GM12878 (cell line): ENCODE measurements at regions of chr16 and their contacts with region 1.

Region 1: DNA sequence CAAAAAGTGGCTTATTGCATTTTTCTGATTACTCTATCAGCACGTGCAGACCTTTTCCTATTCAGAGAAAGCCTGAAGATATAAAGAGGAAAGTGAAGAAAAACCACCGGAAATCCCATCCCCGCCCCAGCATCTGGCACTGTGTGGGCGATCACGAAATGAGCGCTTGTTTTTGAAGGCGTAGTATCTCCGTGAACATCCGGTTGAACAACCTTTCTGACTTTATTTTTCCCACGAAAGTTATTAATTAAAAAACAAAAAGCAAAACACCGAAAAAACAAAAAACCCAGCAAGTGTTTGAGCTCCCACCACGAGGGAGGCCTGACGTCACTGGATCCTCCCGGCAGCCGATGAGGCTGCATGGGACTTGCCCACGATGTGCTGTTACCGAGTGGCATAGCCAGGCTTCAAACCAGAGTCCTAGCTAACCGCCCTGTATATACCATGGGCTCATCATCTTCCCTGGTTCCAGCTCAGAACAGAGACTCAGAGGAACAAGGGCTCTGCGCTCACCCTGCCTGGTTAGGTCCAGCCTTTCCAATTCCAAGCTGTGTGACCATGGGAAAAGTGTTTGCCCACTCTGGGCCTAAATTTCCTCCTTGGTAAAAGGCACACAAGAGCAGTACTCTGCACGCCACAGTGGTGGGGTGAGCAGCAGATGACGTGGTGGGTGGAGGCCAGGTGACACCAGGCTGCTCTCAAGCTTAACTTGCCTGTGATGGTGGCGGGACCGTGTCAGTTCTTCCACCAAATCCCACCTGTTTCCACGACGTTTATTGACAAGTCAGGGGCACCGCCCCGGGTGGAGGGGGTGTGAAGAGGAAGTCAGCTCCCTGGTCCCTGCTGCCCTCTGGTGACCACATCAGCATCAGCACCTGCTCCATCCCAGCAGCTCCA is 34.3 kb upstream of the IL21R start:
- DNase-seq: peak; percentile 87
- ATAC-seq: peak; percentile 83
- H3K4me3 ChIP-seq: peak overlapping the region; percentile 46
- H3K27ac ChIP-seq: peak overlapping the region; percentile 95
- H3K4me1 ChIP-seq: peaks cover 34% of the 10 kb centered on the region
- H3K27me3 ChIP-seq: no peaks in the 10 kb centered on the region
- CTCF ChIP-seq: peak; percentile 84 to 91 (median 87)
- EP300 ChIP-seq: peak; percentile 72 to 86; a peak in 3 of 4 replicates
- POLR2A ChIP-seq: peak; percentile 54
- RAD21 ChIP-seq: peak; percentile 83

Region 2: DNA sequence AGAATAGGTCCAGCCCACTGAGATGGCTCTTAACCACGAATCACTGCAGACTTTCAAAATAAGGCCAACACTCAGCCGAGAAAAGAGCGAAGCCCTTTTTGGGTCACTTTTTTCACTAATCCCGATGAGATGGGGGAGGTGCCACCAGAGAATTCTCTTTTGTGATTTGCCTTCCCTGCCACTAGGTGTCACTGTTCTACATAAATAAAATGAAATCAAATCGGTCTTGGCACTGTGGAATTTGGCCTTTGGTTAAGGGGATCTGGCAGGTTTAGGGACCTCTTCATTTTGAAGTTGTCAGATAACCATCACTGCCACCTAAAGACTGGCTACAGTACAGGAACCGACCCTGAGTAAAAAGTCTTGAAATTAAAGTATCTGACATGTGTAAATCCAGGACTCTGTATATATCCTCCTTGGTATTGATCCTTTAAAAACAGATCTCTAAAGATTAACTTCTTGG is 1529.0 kb before region 1 on chr16:
- CTCF ChIA-PET with region 1: no interaction called
- POLR2A ChIA-PET with region 1: no interaction called
- RAD21 ChIA-PET with region 1: no interaction called
- SMC1A ChIA-PET with region 1: no interaction called
- in situ Hi-C with region 1: loop called (anchors 25 kb)
- intact Hi-C with region 1: no loop called
- DNase-seq: peak; percentile 11
- ATAC-seq: peak; percentile 65
- H3K4me3 ChIP-seq: no peak overlapping the region
- H3K27ac ChIP-seq: no peak overlapping the region
- H3K4me1 ChIP-seq: no peaks in the 10 kb centered on the region
- H3K27me3 ChIP-seq: no peaks in the 10 kb centered on the region
- CTCF ChIP-seq: peak; percentile 63 to 67 (median 63)
- EP300 ChIP-seq: no peak
- POLR2A ChIP-seq: no peak
- RAD21 ChIP-seq: peak; percentile 72

Region 3: GRCh38 chr16:27203429-27204231 is 164.1 kb before region 1 on chr16 and contains the start of gene KDM8:
- CTCF ChIA-PET with region 1: interaction called, 14 read pairs
- POLR2A ChIA-PET with region 1: interaction called, 7 read pairs
- RAD21 ChIA-PET with region 1: interaction called, 23 read pairs
- SMC1A ChIA-PET with region 1: interaction called, 10 read pairs
- in situ Hi-C with region 1: no loop called
- intact Hi-C with region 1: no loop called
- DNase-seq: peak; percentile 99
- ATAC-seq: peak; percentile 90
- H3K4me3 ChIP-seq: peak within 1 kb of the TSS; percentile 80
- H3K27ac ChIP-seq: peak within 1 kb of the TSS; percentile 97
- H3K4me1 ChIP-seq: peaks cover 25% of the 10 kb centered on the region
- H3K27me3 ChIP-seq: no peaks in the 10 kb centered on the region
- CTCF ChIP-seq: no peak
- EP300 ChIP-seq: no peak
- POLR2A ChIP-seq: peak; percentile 88
- RAD21 ChIP-seq: no peak
- polyA plus RNA-seq, gene KDM8: 0.79 to 1.3 TPM

Region 4: GRCh38 chr16:27268376-27269299 is 99.1 kb before region 1 on chr16 and contains the start of gene NSMCE1:
- CTCF ChIA-PET with region 1: interaction called, 11 read pairs
- POLR2A ChIA-PET with region 1: interaction called, 5 read pairs
- RAD21 ChIA-PET with region 1: interaction called, 36 read pairs
- SMC1A ChIA-PET with region 1: interaction called, 41 read pairs
- in situ Hi-C with region 1: no loop called
- intact Hi-C with region 1: no loop called
- DNase-seq: peak; percentile 84
- ATAC-seq: peak; percentile 95
- H3K4me3 ChIP-seq: peak within 1 kb of the TSS; percentile 81
- H3K27ac ChIP-seq: peak within 1 kb of the TSS; percentile 79
- H3K4me1 ChIP-seq: peaks cover 4% of the 10 kb centered on the region
- H3K27me3 ChIP-seq: no peaks in the 10 kb centered on the region
- CTCF ChIP-seq: peak; percentile 12 to 42 (median 13); a peak in 2 of 6 replicates
- EP300 ChIP-seq: 0 out of 4 replicates have a peak, but pooled peaks have one; percentile 21 to 25
- POLR2A ChIP-seq: peak; percentile 96
- RAD21 ChIP-seq: no peak
- polyA plus RNA-seq, gene NSMCE1: 168 to 214 TPM

Region 5: GRCh38 chr16:27387724-27388123 is 20.0 kb after region 1 on chr16:
- CTCF ChIA-PET with region 1: interaction called, 6 read pairs
- POLR2A ChIA-PET with region 1: interaction called, 4 read pairs
- RAD21 ChIA-PET with region 1: interaction called, 11 read pairs
- SMC1A ChIA-PET with region 1: interaction called, 97 read pairs
- in situ Hi-C with region 1: no loop called
- intact Hi-C with region 1: no loop called
- DNase-seq: peak; percentile 74
- ATAC-seq: peak; percentile 88
- H3K4me3 ChIP-seq: no peak overlapping the region
- H3K27ac ChIP-seq: peak overlapping the region; percentile 54
- H3K4me1 ChIP-seq: peaks cover 37% of the 10 kb centered on the region
- H3K27me3 ChIP-seq: no peaks in the 10 kb centered on the region
- CTCF ChIP-seq: no peak
- EP300 ChIP-seq: peak; percentile 65 to 95; a peak in 2 of 4 replicates
- POLR2A ChIP-seq: no peak
- RAD21 ChIP-seq: no peak

Region 6: DNA sequence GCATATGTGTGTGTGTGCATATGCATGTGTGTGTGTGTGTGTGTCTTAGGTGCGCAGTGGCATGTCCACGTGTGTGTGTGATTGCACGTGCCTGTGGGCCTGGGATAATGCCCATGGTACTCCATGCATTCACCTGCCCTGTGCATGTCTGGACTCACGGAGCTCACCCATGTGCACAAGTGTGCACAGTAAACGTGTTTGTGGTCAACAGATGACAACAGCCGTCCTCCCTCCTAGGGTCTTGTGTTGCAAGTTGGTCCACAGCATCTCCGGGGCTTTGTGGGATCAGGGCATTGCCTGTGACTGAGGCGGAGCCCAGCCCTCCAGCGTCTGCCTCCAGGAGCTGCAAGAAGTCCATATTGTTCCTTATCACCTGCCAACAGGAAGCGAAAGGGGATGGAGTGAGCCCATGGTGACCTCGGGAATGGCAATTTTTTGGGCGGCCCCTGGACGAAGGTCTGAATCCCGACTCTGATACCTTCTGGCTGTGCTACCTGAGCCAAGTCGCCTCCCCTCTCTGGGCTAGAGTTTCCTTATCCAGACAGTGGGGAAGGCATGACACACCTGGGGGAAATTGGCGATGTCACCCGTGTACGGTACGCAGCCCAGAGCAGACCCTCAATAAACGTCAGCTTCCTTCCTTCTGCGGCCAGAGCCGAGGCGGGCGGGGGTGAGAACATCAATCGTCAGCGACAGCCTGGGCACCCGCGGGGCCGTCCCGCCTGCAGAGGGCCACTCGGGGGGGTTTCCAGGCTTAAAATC is 81.9 kb after region 1 on chr16:
- CTCF ChIA-PET with region 1: interaction called, 106 read pairs
- POLR2A ChIA-PET with region 1: interaction called, 10 read pairs
- RAD21 ChIA-PET with region 1: interaction called, 28 read pairs
- SMC1A ChIA-PET with region 1: interaction called, 62 read pairs
- in situ Hi-C with region 1: no loop called
- intact Hi-C with region 1: no loop called
- DNase-seq: no peak
- ATAC-seq: peak; percentile 79
- H3K4me3 ChIP-seq: no peak overlapping the region
- H3K27ac ChIP-seq: peak overlapping the region; percentile 66
- H3K4me1 ChIP-seq: peaks cover 57% of the 10 kb centered on the region
- H3K27me3 ChIP-seq: no peaks in the 10 kb centered on the region
- CTCF ChIP-seq: no peak
- EP300 ChIP-seq: peak; percentile 81; a peak in 3 of 4 replicates
- POLR2A ChIP-seq: peak; percentile 76
- RAD21 ChIP-seq: 0 out of 2 replicates have a peak, but pooled peaks have one; percentile 1

Region 7: DNA sequence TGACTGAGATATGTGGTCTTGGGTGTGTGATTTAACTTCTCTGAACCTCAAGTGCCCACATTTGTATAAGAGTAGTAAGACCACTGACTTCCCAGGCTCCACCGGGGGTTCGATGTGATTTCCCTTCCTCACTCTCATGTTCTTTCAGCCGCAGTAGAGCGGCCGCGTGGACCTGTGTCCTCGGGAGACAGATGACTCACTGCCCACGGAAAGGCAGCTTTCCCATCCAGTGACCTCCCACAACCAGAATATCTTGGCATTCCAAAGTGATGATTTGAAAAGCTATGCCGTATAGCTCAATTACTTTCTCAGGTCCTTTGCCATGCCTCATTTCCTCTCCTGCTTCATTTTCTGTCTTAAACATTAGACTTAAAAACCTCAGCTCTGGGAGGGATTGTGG is 107.9 kb after region 1 on chr16:
- CTCF ChIA-PET with region 1: no interaction called
- POLR2A ChIA-PET with region 1: no interaction called
- RAD21 ChIA-PET with region 1: no interaction called
- SMC1A ChIA-PET with region 1: no interaction called
- in situ Hi-C with region 1: no loop called
- intact Hi-C with region 1: no loop called
- DNase-seq: no peak
- ATAC-seq: no peak
- H3K4me3 ChIP-seq: no peak overlapping the region
- H3K27ac ChIP-seq: no peak overlapping the region
- H3K4me1 ChIP-seq: no peaks in the 10 kb centered on the region
- H3K27me3 ChIP-seq: no peaks in the 10 kb centered on the region
- CTCF ChIP-seq: no peak
- EP300 ChIP-seq: no peak
- POLR2A ChIP-seq: no peak
- RAD21 ChIP-seq: no peak